Endothelial cell of umbilical vein (primary cell): ENCODE measurements at regions of chr3 and their contacts with region 1.

Region 1: GRCh38 chr3:189947948-189948723 is 172.6 kb downstream of the P3H2 start:
- DNase-seq: peak; percentile 59
- H3K4me3 ChIP-seq: no peak overlapping the region
- H3K27ac ChIP-seq: no peak overlapping the region
- H3K4me1 ChIP-seq: no peaks in the 10 kb centered on the region
- H3K27me3 ChIP-seq: peaks cover 2 to 4% of the 10 kb centered on the region in 2 experiments
- CTCF ChIP-seq: peak; percentile 37 to 39
- POLR2A ChIP-seq: no peak

Region 2: DNA sequence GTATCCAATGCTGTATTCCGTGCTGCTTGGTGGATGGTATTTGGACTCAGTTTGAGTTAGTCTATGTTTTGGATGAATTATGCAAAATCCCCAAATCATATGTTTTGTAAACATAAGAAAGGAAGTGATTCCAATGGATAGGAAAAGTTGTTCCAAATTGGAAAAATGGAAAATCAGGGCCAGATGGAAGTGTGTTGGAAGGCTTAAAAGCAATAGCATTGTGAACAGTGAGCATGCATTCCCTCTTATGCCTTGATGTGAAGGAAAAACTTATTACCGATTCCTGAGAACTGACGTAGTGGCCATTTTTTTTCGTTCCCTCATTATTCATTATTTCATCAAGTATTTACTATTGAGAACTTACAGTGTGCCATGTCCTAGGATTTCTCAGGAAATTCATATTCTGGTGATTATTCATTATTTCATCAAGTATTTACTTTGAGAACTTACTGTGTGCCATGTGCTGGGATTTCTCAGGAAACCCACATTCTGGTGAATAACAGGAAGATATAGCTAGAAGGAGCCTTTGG is 920.4 kb before region 1 on chr3:
- CTCF ChIA-PET with region 1: no interaction called
- POLR2A ChIA-PET with region 1: no interaction called
- dilution Hi-C with region 1: no loop called
- intact Hi-C with region 1: no loop called
- DNase-seq: no peak
- H3K4me3 ChIP-seq: no peak overlapping the region
- H3K27ac ChIP-seq: no peak overlapping the region
- H3K4me1 ChIP-seq: no peaks in the 10 kb centered on the region
- H3K27me3 ChIP-seq: peaks cover 0 to 2% of the 10 kb centered on the region in 2 experiments
- CTCF ChIP-seq: no peak
- POLR2A ChIP-seq: no peak

Region 3: GRCh38 chr3:189041482-189042090 is 906.5 kb before region 1 on chr3:
- CTCF ChIA-PET with region 1: interaction called, 10 read pairs
- POLR2A ChIA-PET with region 1: no interaction called
- dilution Hi-C with region 1: no loop called
- intact Hi-C with region 1: no loop called
- DNase-seq: peak; percentile 67
- H3K4me3 ChIP-seq: no peak overlapping the region
- H3K27ac ChIP-seq: no peak overlapping the region
- H3K4me1 ChIP-seq: no peaks in the 10 kb centered on the region
- H3K27me3 ChIP-seq: peaks cover 0 to 3% of the 10 kb centered on the region in 2 experiments
- CTCF ChIP-seq: peak; percentile 45 to 56
- POLR2A ChIP-seq: no peak

Region 4: DNA sequence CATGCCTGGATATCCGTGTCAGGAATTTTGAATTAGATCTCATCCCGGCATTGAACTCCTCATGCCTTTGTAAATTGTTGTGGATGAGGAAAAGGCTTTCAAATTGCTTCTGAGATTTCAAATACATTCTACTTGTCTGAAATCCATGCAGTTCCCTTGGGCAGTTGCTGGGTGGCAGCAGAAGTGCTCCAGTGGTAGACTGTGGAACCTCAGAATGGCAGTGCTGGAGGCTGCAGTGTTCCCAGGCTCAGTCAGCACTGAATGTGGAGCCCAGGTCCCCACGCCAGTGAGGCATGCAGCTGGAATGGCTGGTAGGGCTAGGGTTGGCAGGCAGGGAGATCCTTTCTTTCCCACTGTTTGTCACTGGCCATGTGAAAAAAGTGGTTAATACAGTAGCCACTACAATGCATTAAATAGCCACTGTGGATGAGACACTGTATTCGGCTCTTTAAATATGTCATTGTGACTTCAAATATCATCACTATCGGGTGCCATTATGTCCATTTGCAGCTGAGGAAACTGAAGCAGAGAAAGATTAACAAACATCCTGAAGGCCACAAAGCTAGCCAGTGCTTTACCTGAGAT is 677.8 kb before region 1 on chr3:
- CTCF ChIA-PET with region 1: interaction called, 40 read pairs
- POLR2A ChIA-PET with region 1: no interaction called
- dilution Hi-C with region 1: no loop called
- intact Hi-C with region 1: loop called (anchors 1 kb)
- DNase-seq: peak; percentile 28
- H3K4me3 ChIP-seq: no peak overlapping the region
- H3K27ac ChIP-seq: no peak overlapping the region
- H3K4me1 ChIP-seq: no peaks in the 10 kb centered on the region
- H3K27me3 ChIP-seq: no peaks in the 10 kb centered on the region
- CTCF ChIP-seq: no peak
- POLR2A ChIP-seq: no peak

Region 5: GRCh38 chr3:189288348-189289235 is 659.5 kb before region 1 on chr3:
- CTCF ChIA-PET with region 1: no interaction called
- POLR2A ChIA-PET with region 1: no interaction called
- dilution Hi-C with region 1: no loop called
- intact Hi-C with region 1: no loop called
- DNase-seq: no peak
- H3K4me3 ChIP-seq: no peak overlapping the region
- H3K27ac ChIP-seq: no peak overlapping the region
- H3K4me1 ChIP-seq: no peaks in the 10 kb centered on the region
- H3K27me3 ChIP-seq: no peaks in the 10 kb centered on the region
- CTCF ChIP-seq: no peak
- POLR2A ChIP-seq: no peak

Region 6: GRCh38 chr3:189673535-189673934 is 274.6 kb before region 1 on chr3:
- CTCF ChIA-PET with region 1: interaction called, 12 read pairs
- POLR2A ChIA-PET with region 1: no interaction called
- dilution Hi-C with region 1: no loop called
- intact Hi-C with region 1: no loop called
- DNase-seq: no peak
- H3K4me3 ChIP-seq: no peak overlapping the region
- H3K27ac ChIP-seq: no peak overlapping the region
- H3K4me1 ChIP-seq: no peaks in the 10 kb centered on the region
- H3K27me3 ChIP-seq: no peaks in the 10 kb centered on the region
- CTCF ChIP-seq: no peak
- POLR2A ChIP-seq: no peak

Region 7: DNA sequence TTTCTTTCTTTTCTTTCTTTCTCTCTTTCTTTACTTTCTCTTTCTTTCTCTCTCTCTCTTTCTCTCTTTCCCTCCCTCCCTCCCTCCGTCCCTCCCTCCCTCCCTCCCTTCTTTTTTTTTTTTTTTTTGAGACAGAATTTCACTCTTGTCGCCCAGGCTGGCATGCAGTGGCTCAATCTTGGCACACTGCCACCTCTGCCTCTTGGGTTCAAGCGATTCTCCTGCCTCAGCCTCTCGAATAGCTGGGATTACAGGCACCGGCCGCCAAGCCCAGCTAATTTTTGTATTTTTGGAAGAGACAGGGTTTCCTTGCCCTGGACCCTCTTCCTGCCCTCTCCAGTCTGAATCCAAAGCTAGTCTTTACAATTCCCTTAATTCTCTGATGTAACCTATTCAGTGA is 214.1 kb before region 1 on chr3:
- CTCF ChIA-PET with region 1: interaction called, 3 read pairs
- POLR2A ChIA-PET with region 1: no interaction called
- dilution Hi-C with region 1: no loop called
- intact Hi-C with region 1: loop called (anchors 5 kb)
- DNase-seq: no peak
- H3K4me3 ChIP-seq: no peak overlapping the region
- H3K27ac ChIP-seq: no peak overlapping the region
- H3K4me1 ChIP-seq: no peaks in the 10 kb centered on the region
- H3K27me3 ChIP-seq: no peaks in the 10 kb centered on the region
- CTCF ChIP-seq: no peak
- POLR2A ChIP-seq: no peak

Region 8: GRCh38 chr3:189824629-189825312 is 123.4 kb before region 1 on chr3:
- CTCF ChIA-PET with region 1: interaction called, 19 read pairs
- POLR2A ChIA-PET with region 1: no interaction called
- dilution Hi-C with region 1: no loop called
- intact Hi-C with region 1: no loop called
- DNase-seq: peak; percentile 78
- H3K4me3 ChIP-seq: no peak overlapping the region
- H3K27ac ChIP-seq: no peak overlapping the region
- H3K4me1 ChIP-seq: no peaks in the 10 kb centered on the region
- H3K27me3 ChIP-seq: no peaks in the 10 kb centered on the region
- CTCF ChIP-seq: no peak
- POLR2A ChIP-seq: no peak

Region 9: GRCh38 chr3:190086191-190086590 is 138.1 kb after region 1 on chr3:
- CTCF ChIA-PET with region 1: no interaction called
- POLR2A ChIA-PET with region 1: no interaction called
- dilution Hi-C with region 1: no loop called
- intact Hi-C with region 1: no loop called
- DNase-seq: no peak
- H3K4me3 ChIP-seq: no peak overlapping the region
- H3K27ac ChIP-seq: no peak overlapping the region
- H3K4me1 ChIP-seq: no peaks in the 10 kb centered on the region
- H3K27me3 ChIP-seq: no peaks in the 10 kb centered on the region
- CTCF ChIP-seq: no peak
- POLR2A ChIP-seq: no peak

Region 10: GRCh38 chr3:190424478-190425439 is 476.6 kb after region 1 on chr3:
- CTCF ChIA-PET with region 1: no interaction called
- POLR2A ChIA-PET with region 1: no interaction called
- dilution Hi-C with region 1: no loop called
- intact Hi-C with region 1: no loop called
- DNase-seq: peak; percentile 76
- H3K4me3 ChIP-seq: no peak overlapping the region
- H3K27ac ChIP-seq: no peak overlapping the region
- H3K4me1 ChIP-seq: no peaks in the 10 kb centered on the region
- H3K27me3 ChIP-seq: peaks cover 0 to 2% of the 10 kb centered on the region in 2 experiments
- CTCF ChIP-seq: peak; percentile 52
- POLR2A ChIP-seq: no peak